ENCODE measurements at regions of chr3 and their contacts with region 1.

Region 1: DNA sequence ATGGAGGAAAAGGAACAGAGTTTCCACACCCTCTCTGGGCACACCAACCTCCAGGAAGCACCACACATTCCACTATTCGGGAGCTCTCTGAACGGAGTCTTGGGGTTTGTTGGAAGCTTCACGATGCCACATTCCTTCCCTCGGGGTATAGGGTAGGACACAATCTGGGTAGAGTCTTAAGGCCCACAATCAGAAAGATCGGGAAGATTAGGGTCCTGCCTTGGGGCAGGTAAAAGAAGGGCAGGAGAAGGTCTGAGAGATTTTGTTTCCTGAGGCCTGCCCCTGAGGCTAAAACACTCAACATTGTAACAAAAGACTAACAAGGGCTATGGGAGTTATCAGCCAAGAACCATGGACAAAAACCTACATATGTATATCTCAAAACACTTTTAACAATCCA is 89.2 kb upstream of the RAP2B start:
- DNase-seq: peak; percentile 61 to 69
- H3K4me3 ChIP-seq: no peak overlapping the region
- H3K27ac ChIP-seq: no peak overlapping the region
- H3K4me1 ChIP-seq: peaks cover 18% of the 10 kb centered on the region; the same call in 1 of the 2 replicates
- H3K27me3 ChIP-seq: no peaks in the 10 kb centered on the region
- CTCF ChIP-seq: no peak

Region 2: DNA sequence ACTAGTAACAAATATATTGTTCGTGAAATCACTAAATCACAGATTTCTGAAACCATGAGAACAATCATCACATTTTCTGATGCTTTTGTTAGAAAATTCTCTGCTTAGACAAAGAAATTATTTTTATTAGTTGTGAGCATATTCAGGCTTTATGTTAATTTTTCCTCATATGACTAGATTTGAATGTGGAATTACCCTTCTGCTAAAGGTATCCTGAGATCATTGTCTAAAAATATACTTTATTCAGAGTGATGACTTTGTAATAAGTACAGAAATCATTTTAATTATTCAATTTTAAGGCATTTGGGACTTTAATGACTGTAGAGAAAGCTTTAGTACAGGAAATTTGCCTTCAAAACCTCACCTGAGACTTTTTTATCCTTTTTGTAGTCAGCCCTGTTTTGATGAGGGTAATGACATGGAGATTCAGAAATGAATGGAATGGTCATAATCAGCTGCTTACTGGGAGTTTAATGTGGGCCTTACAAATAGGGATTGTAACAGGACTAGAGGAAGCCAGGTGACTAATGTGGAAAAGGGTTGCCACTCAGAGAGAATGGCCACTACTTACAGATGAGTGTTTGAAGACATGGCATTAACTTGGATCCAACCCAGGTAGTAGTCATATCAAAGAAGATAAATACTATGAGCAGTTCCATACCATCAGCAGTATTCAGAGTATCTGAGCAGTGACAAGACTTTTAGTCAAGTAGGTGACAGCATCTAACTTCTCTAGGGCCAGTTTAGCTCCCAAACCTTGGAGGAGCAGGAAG is 655.9 kb before region 1 on chr3:
- CTCF ChIA-PET with region 1: no interaction called
- POLR2A ChIA-PET with region 1: no interaction called
- intact Hi-C with region 1: no loop called
- DNase-seq: no peak
- H3K4me3 ChIP-seq: no peak overlapping the region
- H3K27ac ChIP-seq: no peak overlapping the region
- H3K4me1 ChIP-seq: no peaks in the 10 kb centered on the region
- H3K27me3 ChIP-seq: no peaks in the 10 kb centered on the region
- CTCF ChIP-seq: no peak

Region 3: GRCh38 chr3:153130312-153130990 is 57.6 kb after region 1 on chr3:
- CTCF ChIA-PET with region 1: no interaction called
- POLR2A ChIA-PET with region 1: no interaction called
- intact Hi-C with region 1: loop called (anchors 2 kb)
- DNase-seq: peak in 1 of 2 experiments; percentile 93
- H3K4me3 ChIP-seq: no peak overlapping the region
- H3K27ac ChIP-seq: peak overlapping the region; percentile 90
- H3K4me1 ChIP-seq: peaks cover 21% of the 10 kb centered on the region
- H3K27me3 ChIP-seq: no peaks in the 10 kb centered on the region
- CTCF ChIP-seq: no peak

Region 4: GRCh38 chr3:153138276-153139210 is 65.7 kb after region 1 on chr3:
- CTCF ChIA-PET with region 1: no interaction called
- POLR2A ChIA-PET with region 1: interaction called, 5 read pairs
- intact Hi-C with region 1: loop called (anchors 1 kb)
- DNase-seq: peak; percentile 89 to 100
- H3K4me3 ChIP-seq: no peak overlapping the region
- H3K27ac ChIP-seq: peak overlapping the region; percentile 98
- H3K4me1 ChIP-seq: peaks cover 43% of the 10 kb centered on the region
- H3K27me3 ChIP-seq: no peaks in the 10 kb centered on the region
- CTCF ChIP-seq: no peak

Region 5: GRCh38 chr3:153209596-153209995 is 136.7 kb after region 1 on chr3:
- CTCF ChIA-PET with region 1: no interaction called
- POLR2A ChIA-PET with region 1: no interaction called
- intact Hi-C with region 1: no loop called
- DNase-seq: peak; percentile 82 to 96
- H3K4me3 ChIP-seq: peak overlapping the region; percentile 35; the same call in 1 of the 2 replicates
- H3K27ac ChIP-seq: peak overlapping the region; percentile 84
- H3K4me1 ChIP-seq: peaks cover 34% of the 10 kb centered on the region
- H3K27me3 ChIP-seq: no peaks in the 10 kb centered on the region
- CTCF ChIP-seq: no peak